ENCODE measurements at regions of chr2 and their contacts with region 1.

Region 1: DNA sequence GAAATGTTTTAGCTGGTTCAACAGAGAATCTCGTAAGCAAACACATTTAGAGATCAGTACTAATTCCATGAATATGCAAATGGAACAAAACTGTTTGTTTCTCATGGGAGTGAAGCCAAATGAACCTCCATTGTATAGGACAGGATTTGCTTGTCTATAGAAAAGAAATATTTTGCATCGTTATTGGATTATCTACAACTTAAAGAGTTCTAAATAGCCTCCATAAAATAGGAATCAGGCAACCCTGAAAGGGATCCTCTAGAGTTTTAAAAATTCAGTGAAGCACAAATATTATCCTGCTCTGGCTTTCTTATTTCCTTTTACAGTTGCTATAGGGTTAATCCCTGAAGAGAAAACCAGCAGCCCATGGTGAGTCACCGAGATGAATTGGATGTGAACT is 378.4 kb upstream of the NRXN1 start:
- DNase-seq: no peak
- ATAC-seq: no peak

Region 2: DNA sequence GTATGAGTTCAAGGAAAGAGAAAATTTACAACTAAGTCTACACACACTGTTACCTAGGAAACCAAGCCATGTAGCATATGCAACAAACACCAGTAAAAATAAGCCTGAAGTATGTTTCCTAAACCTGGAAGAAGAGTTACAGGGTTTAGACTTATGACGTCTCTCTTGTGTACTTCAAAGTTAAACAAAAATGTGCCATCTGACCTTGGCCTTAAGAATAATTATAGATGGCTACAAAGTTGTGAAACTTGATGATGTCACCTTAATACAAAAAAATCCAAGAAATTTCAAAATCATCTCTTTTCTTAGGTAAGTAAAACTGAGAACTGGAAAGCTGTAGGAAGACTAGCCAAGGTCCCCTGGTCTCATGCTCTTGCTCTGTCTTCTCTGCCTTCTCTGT is 80.8 kb before region 1 on chr2:
- intact Hi-C with region 1: no loop called
- DNase-seq: no peak
- ATAC-seq: no peak

Region 3: GRCh38 chr2:51553476-51553875 is 143.1 kb after region 1 on chr2:
- intact Hi-C with region 1: no loop called
- DNase-seq: no peak
- ATAC-seq: no peak

Region 4: DNA sequence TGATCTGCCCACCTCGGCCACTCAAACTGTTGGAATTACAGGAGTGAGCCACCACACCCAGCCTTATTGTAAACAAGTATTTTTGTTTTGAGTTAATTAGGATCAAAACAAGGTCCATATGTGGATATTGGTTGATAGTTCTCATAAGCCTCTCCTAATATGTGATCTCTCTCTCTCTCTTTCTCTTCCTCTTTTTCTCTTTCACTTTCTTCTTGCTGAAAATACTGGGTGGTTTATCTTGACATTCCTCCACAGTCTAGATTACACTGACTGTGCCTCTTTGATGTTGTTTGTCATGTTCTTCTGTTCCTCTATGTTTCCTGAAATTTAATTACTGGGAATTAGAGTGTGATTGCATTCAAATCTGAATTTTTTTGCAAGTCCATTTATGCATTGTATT is 169.1 kb after region 1 on chr2:
- intact Hi-C with region 1: no loop called
- DNase-seq: no peak
- ATAC-seq: no peak

Region 5: DNA sequence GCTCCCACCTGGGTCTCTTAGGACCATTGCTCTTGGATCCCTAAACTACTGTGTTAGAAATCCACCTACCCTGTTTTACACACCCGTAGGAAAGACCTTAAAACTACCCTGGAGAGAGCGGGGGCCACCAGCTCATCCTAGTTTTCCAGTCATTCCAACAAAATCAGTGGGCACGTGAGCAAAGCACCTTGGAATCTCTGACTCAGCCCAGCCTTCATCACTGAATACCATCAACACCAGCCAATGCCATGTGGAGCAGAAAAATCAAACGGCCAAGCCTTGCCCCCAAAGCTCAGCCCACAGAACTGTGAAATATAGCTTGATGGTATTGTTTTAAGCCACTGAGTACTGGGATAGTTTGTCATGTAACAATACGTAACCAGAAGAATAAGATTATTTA is 1907.5 kb after region 1 on chr2:
- intact Hi-C with region 1: loop called (anchors 10 kb)
- DNase-seq: no peak
- ATAC-seq: no peak